ENCODE measurements at regions of chr5 and their contacts with region 1.

Region 1: GRCh38 chr5:138035605-138036537 is 3.0 kb upstream of the FAM13B start:
- DNase-seq: peak; percentile 75 to 81 (median 76)
- H3K4me3 ChIP-seq: no peak overlapping the region
- H3K4me3 Mint-ChIP-seq: peak overlapping the region in 7 of 8 donors; percentile 1 to 90 (median 56)
- H3K27ac ChIP-seq: no peak overlapping the region
- H3K27ac Mint-ChIP-seq: peak overlapping the region; percentile 14 to 77 (median 72)
- H3K4me1 ChIP-seq: peaks cover 20% of the 10 kb centered on the region
- H3K4me1 Mint-ChIP-seq: peaks cover 18 to 38% (median 25%) of the 10 kb centered on the region in 4 donors
- H3K27me3 ChIP-seq: no peaks in the 10 kb centered on the region
- H3K27me3 Mint-ChIP-seq: no peaks in the 10 kb centered on the region

Region 2: DNA sequence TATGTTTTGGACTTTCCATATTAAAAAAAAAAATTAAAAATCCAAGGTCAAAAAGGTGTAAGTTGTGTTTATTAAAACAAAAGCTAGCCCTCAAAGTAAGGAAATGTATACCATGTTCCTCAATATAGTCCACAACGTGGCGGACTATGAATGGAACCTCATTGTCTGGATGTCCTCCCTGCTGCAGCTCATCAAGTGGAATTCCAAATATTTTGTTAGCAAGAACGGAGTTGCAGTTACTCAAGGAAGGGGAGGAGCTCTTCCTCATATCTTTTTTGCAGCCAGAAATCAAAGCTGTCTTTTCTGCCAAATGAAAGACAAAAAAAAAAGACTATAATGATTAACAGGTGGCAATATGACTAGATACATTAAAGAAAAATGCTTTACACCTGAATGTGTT is 17.0 kb before region 1 on chr5:
- CTCF ChIA-PET with region 1: interaction called, 13 read pairs
- POLR2A ChIA-PET with region 1: no interaction called
- intact Hi-C with region 1: no loop called
- DNase-seq: no peak
- H3K4me3 ChIP-seq: no peak overlapping the region
- H3K4me3 Mint-ChIP-seq: no peak overlapping the region
- H3K27ac ChIP-seq: no peak overlapping the region
- H3K27ac Mint-ChIP-seq: peak overlapping the region in 2 of 7 donors; percentile 6 to 57
- H3K4me1 ChIP-seq: peaks cover 17% of the 10 kb centered on the region
- H3K4me1 Mint-ChIP-seq: peaks cover 23 to 67% (median 37%) of the 10 kb centered on the region in 4 donors
- H3K27me3 ChIP-seq: no peaks in the 10 kb centered on the region
- H3K27me3 Mint-ChIP-seq: no peaks in the 10 kb centered on the region

Region 3: GRCh38 chr5:138024117-138024516 is 11.8 kb before region 1 on chr5:
- CTCF ChIA-PET with region 1: interaction called, 30 read pairs
- POLR2A ChIA-PET with region 1: no interaction called
- intact Hi-C with region 1: no loop called
- DNase-seq: no peak
- H3K4me3 ChIP-seq: no peak overlapping the region
- H3K4me3 Mint-ChIP-seq: peak overlapping the region in 1 of 8 donors; percentile 17
- H3K27ac ChIP-seq: no peak overlapping the region
- H3K27ac Mint-ChIP-seq: peak overlapping the region in 1 of 7 donors; percentile 47
- H3K4me1 ChIP-seq: peaks cover 65% of the 10 kb centered on the region
- H3K4me1 Mint-ChIP-seq: peaks cover 48 to 84% (median 67%) of the 10 kb centered on the region in 4 donors
- H3K27me3 ChIP-seq: no peaks in the 10 kb centered on the region
- H3K27me3 Mint-ChIP-seq: no peaks in the 10 kb centered on the region

Region 4: GRCh38 chr5:138065102-138065501 is 29.2 kb after region 1 on chr5:
- CTCF ChIA-PET with region 1: interaction called, 136 read pairs
- POLR2A ChIA-PET with region 1: interaction called, 7 read pairs
- intact Hi-C with region 1: loop called (anchors 1 kb)
- DNase-seq: no peak
- H3K4me3 ChIP-seq: no peak overlapping the region
- H3K4me3 Mint-ChIP-seq: no peak overlapping the region
- H3K27ac ChIP-seq: no peak overlapping the region
- H3K27ac Mint-ChIP-seq: peak overlapping the region in 2 of 7 donors; percentile 7 to 29
- H3K4me1 ChIP-seq: no peaks in the 10 kb centered on the region
- H3K4me1 Mint-ChIP-seq: peaks cover 3 to 6% (median 5%) of the 10 kb centered on the region in 4 donors
- H3K27me3 ChIP-seq: no peaks in the 10 kb centered on the region
- H3K27me3 Mint-ChIP-seq: peaks cover 0 to 2% of the 10 kb centered on the region in 2 donors

Region 5: GRCh38 chr5:138077065-138077696 is 41.3 kb after region 1 on chr5:
- CTCF ChIA-PET with region 1: interaction called, 11 read pairs
- POLR2A ChIA-PET with region 1: interaction called, 3 read pairs
- intact Hi-C with region 1: no loop called
- DNase-seq: peak in 4 of 5 donors; percentile 28 to 46 (median 38)
- H3K4me3 ChIP-seq: no peak overlapping the region
- H3K4me3 Mint-ChIP-seq: no peak overlapping the region
- H3K27ac ChIP-seq: no peak overlapping the region
- H3K27ac Mint-ChIP-seq: no peak overlapping the region
- H3K4me1 ChIP-seq: no peaks in the 10 kb centered on the region
- H3K4me1 Mint-ChIP-seq: peaks cover 4 to 10% (median 8%) of the 10 kb centered on the region in 4 donors
- H3K27me3 ChIP-seq: no peaks in the 10 kb centered on the region
- H3K27me3 Mint-ChIP-seq: no peaks in the 10 kb centered on the region

Region 6: GRCh38 chr5:138128334-138128733 is 92.5 kb after region 1 on chr5:
- CTCF ChIA-PET with region 1: interaction called, 18 read pairs
- POLR2A ChIA-PET with region 1: no interaction called
- intact Hi-C with region 1: loop called (anchors 1 kb)
- DNase-seq: no peak
- H3K4me3 ChIP-seq: no peak overlapping the region
- H3K4me3 Mint-ChIP-seq: no peak overlapping the region
- H3K27ac ChIP-seq: no peak overlapping the region
- H3K27ac Mint-ChIP-seq: no peak overlapping the region
- H3K4me1 ChIP-seq: no peaks in the 10 kb centered on the region
- H3K4me1 Mint-ChIP-seq: no peaks in the 10 kb centered on the region
- H3K27me3 ChIP-seq: no peaks in the 10 kb centered on the region
- H3K27me3 Mint-ChIP-seq: peaks cover 4 to 7% of the 10 kb centered on the region in 2 donors

Region 7: GRCh38 chr5:138178516-138179276 is 142.8 kb after region 1 on chr5 and contains the starts of genes BRD8 and KIF20A:
- CTCF ChIA-PET with region 1: interaction called, 3 read pairs
- POLR2A ChIA-PET with region 1: no interaction called
- intact Hi-C with region 1: loop called (anchors 2 kb)
- DNase-seq: peak; percentile 85 to 92 (median 88)
- H3K4me3 ChIP-seq: peak within 1 kb of the TSS; percentile 80 to 93
- H3K4me3 Mint-ChIP-seq: peak within 1 kb of the TSS in 1 of 8 donors; percentile 9
- H3K27ac ChIP-seq: peak within 1 kb of the TSS; percentile 72
- H3K27ac Mint-ChIP-seq: peak within 1 kb of the TSS in 2 of 7 donors; percentile 16 to 55
- H3K4me1 ChIP-seq: peaks cover 17% of the 10 kb centered on the region
- H3K4me1 Mint-ChIP-seq: peaks cover 4 to 17% (median 11%) of the 10 kb centered on the region in 4 donors
- H3K27me3 ChIP-seq: no peaks in the 10 kb centered on the region
- H3K27me3 Mint-ChIP-seq: no peaks in the 10 kb centered on the region
- total RNA-seq, gene BRD8: 93.7 to 97.3 TPM
- total RNA-seq, gene KIF20A: not detected